MCF 10A (cell line): ENCODE measurements at regions of chr1 and their contacts with region 1.

Region 1: GRCh38 chr1:248825909-248826760 is at the start of gene SH3BP5L:
- DNase-seq: peak; percentile 100
- H3K4me3 Mint-ChIP-seq: peak within 1 kb of the TSS; percentile 78
- H3K27ac Mint-ChIP-seq: peak within 1 kb of the TSS; percentile 94
- H3K4me1 Mint-ChIP-seq: peaks cover 56% of the 10 kb centered on the region
- H3K27me3 Mint-ChIP-seq: no peaks in the 10 kb centered on the region
- CTCF ChIP-seq: peak; percentile 78
- total RNA-seq, gene SH3BP5L: 31.5 and 34.0 TPM in 2 replicates

Region 2: DNA sequence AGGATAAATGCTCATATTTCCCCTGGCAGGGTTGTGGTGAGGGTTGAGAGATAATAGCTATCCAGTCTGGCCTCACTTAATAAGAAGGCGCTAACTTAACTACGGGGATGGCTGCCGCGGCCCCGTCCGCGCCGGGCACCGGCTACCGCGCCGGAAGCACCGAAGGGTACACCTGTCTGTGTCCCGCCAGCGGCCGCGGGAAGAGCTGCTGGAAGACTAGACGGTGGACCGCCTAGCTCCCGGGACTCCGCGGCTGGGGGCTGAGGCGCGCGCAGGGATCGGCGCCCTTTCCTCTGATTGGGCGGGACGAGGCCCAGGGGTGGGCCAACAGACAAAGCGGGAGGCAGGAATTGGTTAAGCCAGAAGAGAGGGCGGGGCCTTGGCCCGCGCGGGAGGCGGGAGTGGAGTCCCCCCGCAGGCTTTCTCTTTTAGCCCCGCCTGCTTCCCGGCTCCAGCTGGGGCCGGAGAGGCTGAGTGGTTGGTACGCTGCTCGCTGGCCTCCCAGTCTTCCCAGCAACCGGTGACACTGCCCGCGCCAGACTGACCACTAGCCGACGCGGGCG is 11.7 kb after region 1 on chr1 and contains the start of gene ZNF672:
- CTCF ChIA-PET with region 1: interaction called, 87 read pairs
- POLR2A ChIA-PET with region 1: interaction called, 227 read pairs
- intact Hi-C with region 1: loop called (anchors 1 kb)
- DNase-seq: peak; percentile 100
- H3K4me3 Mint-ChIP-seq: no peak within 1 kb of the TSS
- H3K27ac Mint-ChIP-seq: no peak within 1 kb of the TSS
- H3K4me1 Mint-ChIP-seq: peaks cover 20% of the 10 kb centered on the region
- H3K27me3 Mint-ChIP-seq: no peaks in the 10 kb centered on the region
- CTCF ChIP-seq: no peak
- total RNA-seq, gene ZNF672: 35.8 and 36.2 TPM in 2 replicates

Region 3: GRCh38 chr1:248873409-248873992 is 47.4 kb after region 1 on chr1:
- CTCF ChIA-PET with region 1: interaction called, 4 read pairs
- POLR2A ChIA-PET with region 1: interaction called, 55 read pairs
- intact Hi-C with region 1: loop called (anchors 1 kb)
- DNase-seq: peak; percentile 100
- H3K4me3 Mint-ChIP-seq: peak overlapping the region; percentile 94
- H3K27ac Mint-ChIP-seq: peak overlapping the region; percentile 97
- H3K4me1 Mint-ChIP-seq: peaks cover 19% of the 10 kb centered on the region
- H3K27me3 Mint-ChIP-seq: peaks cover 12% of the 10 kb centered on the region
- CTCF ChIP-seq: no peak

Region 4: GRCh38 chr1:248906009-248906752 is 80.0 kb after region 1 on chr1 and contains the start of gene PGBD2:
- CTCF ChIA-PET with region 1: interaction called, 3 read pairs
- POLR2A ChIA-PET with region 1: interaction called, 15 read pairs
- intact Hi-C with region 1: loop called (anchors 1 kb)
- DNase-seq: peak; percentile 96
- H3K4me3 Mint-ChIP-seq: peak within 1 kb of the TSS; percentile 89
- H3K27ac Mint-ChIP-seq: peak within 1 kb of the TSS; percentile 91
- H3K4me1 Mint-ChIP-seq: peaks cover 27% of the 10 kb centered on the region
- H3K27me3 Mint-ChIP-seq: peaks cover 39% of the 10 kb centered on the region
- CTCF ChIP-seq: peak; percentile 86
- total RNA-seq, gene PGBD2: 5.2 and 5.9 TPM in 2 replicates